ENCODE measurements at regions of chr10 and their contacts with region 1.

Region 1: GRCh38 chr10:26879740-26880139 is 19.0 kb upstream of the ABI1 start:
- DNase-seq: no peak
- H3K4me3 ChIP-seq: no peak overlapping the region
- H3K27ac ChIP-seq: no peak overlapping the region
- H3K4me1 ChIP-seq: peaks cover 0 to 4% (median 0%) of the 10 kb centered on the region in 3 donors
- H3K27me3 ChIP-seq: peaks cover 0 to 36% (median 0%) of the 10 kb centered on the region in 4 donors
- CTCF ChIP-seq: no peak
- POLR2A ChIP-seq: no peak

Region 2: GRCh38 chr10:26725837-26726727 is 153.7 kb before region 1 on chr10:
- intact Hi-C with region 1: loop called (anchors 5 kb)
- DNase-seq: no peak
- H3K4me3 ChIP-seq: no peak overlapping the region
- H3K27ac ChIP-seq: no peak overlapping the region
- H3K4me1 ChIP-seq: no peaks in the 10 kb centered on the region
- H3K27me3 ChIP-seq: no peaks in the 10 kb centered on the region
- CTCF ChIP-seq: peak; percentile 64 to 85 (median 82)
- POLR2A ChIP-seq: no peak

Region 3: GRCh38 chr10:27111277-27111676 is 231.5 kb after region 1 on chr10:
- intact Hi-C with region 1: no loop called
- DNase-seq: no peak
- H3K4me3 ChIP-seq: no peak overlapping the region
- H3K27ac ChIP-seq: no peak overlapping the region
- H3K4me1 ChIP-seq: no peaks in the 10 kb centered on the region
- H3K27me3 ChIP-seq: no peaks in the 10 kb centered on the region
- CTCF ChIP-seq: no peak
- POLR2A ChIP-seq: no peak